ENCODE measurements at regions of chr12 and their contacts with region 1.

Region 1: DNA sequence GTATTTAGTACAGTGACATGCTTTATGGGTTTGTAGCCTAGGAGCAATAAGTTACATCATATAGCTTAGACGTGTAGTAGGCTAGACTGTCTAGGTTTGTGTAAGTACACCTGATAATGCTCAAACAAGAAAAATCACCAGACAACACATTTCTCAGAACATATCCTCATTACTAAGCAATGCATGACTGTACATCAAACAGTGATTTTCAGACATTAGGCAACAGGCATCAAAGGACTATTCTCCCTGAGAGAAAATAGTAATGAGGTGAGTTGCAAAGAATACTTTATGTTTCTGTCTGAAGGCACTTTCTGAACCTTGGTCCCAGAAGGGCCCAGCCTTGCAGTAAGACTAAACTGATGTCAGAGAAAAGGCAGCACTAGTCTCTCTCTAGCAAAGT is 48.4 kb upstream of the SYT10 start:
- DNase-seq: no peak
- H3K4me3 ChIP-seq: no peak overlapping the region
- H3K27ac ChIP-seq: no peak overlapping the region
- H3K4me1 ChIP-seq: no peaks in the 10 kb centered on the region
- H3K27me3 ChIP-seq: no peaks in the 10 kb centered on the region
- CTCF ChIP-seq: no peak
- EP300 ChIP-seq: no peak
- POLR2A ChIP-seq: no peak

Region 2: DNA sequence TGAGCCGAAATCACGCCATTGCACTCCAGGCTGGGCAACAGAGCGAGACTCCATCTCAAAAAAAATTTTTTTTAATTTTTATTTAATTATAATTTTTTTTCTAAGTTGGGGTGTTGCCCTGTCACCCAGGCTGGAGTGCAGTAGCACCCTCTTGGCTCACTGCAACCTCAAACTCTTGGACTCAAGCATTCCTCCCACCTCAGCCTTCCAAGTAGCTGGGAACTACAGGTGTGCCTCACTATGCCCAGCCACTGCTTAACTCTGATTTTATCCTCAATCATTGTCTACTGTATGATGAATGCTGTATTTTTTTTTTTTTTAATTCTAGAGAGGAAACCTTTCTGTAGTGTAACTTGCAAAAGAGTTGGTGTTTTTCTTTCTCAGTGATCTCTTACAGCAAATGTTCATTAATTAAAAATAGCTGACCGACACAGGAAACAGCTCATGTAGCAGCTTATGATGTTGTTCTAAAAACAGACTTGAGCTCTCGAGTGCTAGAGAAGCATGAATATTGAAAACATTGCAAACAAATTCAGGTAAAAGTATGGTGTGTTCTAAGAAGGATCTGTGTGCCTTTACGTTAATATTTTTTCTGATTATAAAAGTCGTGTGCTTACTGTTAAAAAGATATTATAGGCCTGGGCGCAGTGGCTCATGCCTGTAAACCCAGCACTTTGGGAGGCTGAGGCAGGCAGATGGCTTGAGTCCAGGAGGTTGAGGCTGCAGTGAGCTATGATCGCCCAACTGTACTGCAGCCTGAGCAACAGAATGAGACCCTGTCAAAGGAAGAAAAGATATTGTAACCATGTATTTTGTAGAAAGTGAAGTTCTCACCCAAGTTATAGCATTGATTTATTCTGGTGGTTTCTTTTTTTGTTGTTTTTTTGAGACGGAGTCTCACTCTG is 1019.8 kb before region 1 on chr12:
- intact Hi-C with region 1: no loop called
- DNase-seq: no peak
- H3K4me3 ChIP-seq: no peak overlapping the region
- H3K27ac ChIP-seq: no peak overlapping the region
- H3K4me1 ChIP-seq: peaks cover 12% of the 10 kb centered on the region
- H3K27me3 ChIP-seq: no peaks in the 10 kb centered on the region
- CTCF ChIP-seq: no peak
- EP300 ChIP-seq: no peak
- POLR2A ChIP-seq: no peak

Region 3: GRCh38 chr12:34275129-34275528 is 787.1 kb after region 1 on chr12:
- intact Hi-C with region 1: loop called in 1 of 4 experiments (anchors 5 kb)
- DNase-seq: no peak
- H3K4me3 ChIP-seq: no peak overlapping the region
- H3K27ac ChIP-seq: no peak overlapping the region
- H3K4me1 ChIP-seq: no peaks in the 10 kb centered on the region
- H3K27me3 ChIP-seq: no peaks in the 10 kb centered on the region
- CTCF ChIP-seq: no peak
- EP300 ChIP-seq: no peak
- POLR2A ChIP-seq: no peak